Ovary (tissue), 10 donors: ENCODE measurements at regions of chr3 and their contacts with region 1.

Region 1: DNA sequence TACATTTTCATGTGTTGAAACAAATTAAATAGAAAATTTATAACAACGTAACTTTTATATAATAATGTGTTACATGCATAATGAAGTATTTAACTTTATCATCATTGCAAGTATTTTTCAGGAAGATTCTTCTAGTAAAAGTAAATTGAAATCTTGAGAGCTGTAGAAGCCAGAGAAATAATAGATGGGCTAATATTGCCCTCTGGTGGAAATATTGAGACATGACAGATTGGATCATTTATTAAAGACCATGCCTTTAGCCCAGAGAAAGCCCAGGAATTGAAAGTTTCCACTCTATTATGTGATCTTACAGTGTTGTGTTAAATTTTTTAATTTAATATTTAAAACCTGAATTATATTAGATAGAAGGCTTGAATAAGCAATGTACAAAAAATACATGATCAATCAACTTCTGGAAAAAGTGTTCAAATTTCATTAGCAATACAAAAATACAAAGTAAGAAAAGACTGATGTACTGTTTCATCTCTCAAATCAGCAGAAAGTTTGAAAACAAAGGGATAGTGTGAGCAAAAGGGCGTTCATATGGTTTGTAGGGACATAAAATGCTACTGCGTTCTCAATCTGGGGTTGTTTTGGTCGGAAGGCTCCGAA is 52.7 kb upstream of the SPTSSB start:
- DNase-seq: no peak
- H3K4me3 ChIP-seq: no peak overlapping the region
- H3K27ac ChIP-seq: no peak overlapping the region
- H3K4me1 ChIP-seq: no peaks in the 10 kb centered on the region
- H3K27me3 ChIP-seq: no peaks in the 10 kb centered on the region
- CTCF ChIP-seq: peak; percentile 38 to 58 (median 47)
- EP300 ChIP-seq: no peak
- POLR2A ChIP-seq: no peak

Region 2: GRCh38 chr3:160697628-160698382 is 726.2 kb before region 1 on chr3:
- intact Hi-C with region 1: loop called in 2 of 4 experiments (anchors 10 kb)
- DNase-seq: no peak
- H3K4me3 ChIP-seq: no peak overlapping the region
- H3K27ac ChIP-seq: no peak overlapping the region
- H3K4me1 ChIP-seq: no peaks in the 10 kb centered on the region
- H3K27me3 ChIP-seq: no peaks in the 10 kb centered on the region
- CTCF ChIP-seq: no peak
- EP300 ChIP-seq: no peak
- POLR2A ChIP-seq: no peak

Region 3: DNA sequence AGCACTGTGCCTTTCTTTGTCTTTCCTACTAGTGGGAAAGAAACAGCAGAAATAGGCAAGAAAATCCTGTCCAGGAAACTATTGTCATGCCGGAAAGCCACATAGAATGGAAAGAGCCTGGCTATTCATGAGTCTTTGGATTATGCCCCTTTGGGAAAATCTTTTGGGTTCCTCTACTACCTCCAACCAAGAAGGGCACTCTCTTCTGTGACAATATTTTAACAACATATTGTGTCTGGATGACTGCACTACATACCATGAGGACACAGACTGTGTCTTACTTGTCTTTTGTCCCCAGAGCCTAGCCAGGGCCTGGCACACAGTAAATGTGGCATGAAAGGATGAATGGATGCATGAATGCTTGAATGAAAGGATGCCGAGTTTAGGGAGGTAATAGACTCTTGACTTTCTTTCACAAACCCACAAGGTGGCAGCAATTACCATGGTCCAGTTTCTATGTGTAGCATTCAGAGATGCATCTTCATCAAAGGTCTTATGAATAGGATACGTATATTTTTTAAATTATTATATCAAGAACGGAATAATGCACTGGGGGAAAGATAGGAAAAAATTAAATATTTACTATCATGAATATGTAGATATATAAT is 716.7 kb before region 1 on chr3:
- intact Hi-C with region 1: loop called in 1 of 4 experiments (anchors 10 kb)
- DNase-seq: peak in 2 of 5 donors; percentile 19 to 28
- H3K4me3 ChIP-seq: no peak overlapping the region
- H3K27ac ChIP-seq: no peak overlapping the region
- H3K4me1 ChIP-seq: no peaks in the 10 kb centered on the region
- H3K27me3 ChIP-seq: no peaks in the 10 kb centered on the region
- CTCF ChIP-seq: peak; percentile 13 to 41 (median 40)
- EP300 ChIP-seq: no peak
- POLR2A ChIP-seq: no peak

Region 4: DNA sequence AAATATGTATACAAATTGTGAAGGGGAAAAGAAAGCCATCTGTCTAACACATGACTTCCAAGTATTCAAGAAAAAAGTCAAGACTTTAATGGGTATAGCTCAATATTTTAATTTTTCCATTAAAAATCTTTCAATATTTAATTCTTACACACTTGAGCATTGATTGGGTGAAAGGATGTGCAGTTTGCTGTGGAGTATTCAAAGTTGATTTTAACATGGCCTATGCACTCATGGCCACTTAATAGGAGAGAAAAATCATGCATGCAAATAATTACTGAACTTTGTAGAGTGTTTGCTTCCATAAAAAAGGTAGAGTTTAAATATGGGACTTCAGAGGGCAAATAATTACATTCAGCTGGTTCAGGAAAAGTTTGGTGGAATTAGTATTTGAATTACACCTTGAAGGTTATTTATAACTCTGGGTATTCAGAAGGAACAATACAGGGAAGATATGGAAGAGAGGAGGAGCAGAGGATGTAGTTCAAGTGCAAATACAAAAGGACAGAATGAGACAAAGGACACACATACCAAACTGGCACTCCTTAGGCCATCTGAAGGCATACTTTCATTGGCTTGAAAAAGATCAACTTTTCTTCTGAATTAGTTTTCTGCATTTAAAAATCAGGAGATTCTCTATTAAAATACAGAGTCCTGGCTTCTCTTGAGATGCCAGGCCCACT is 162.7 kb after region 1 on chr3:
- intact Hi-C with region 1: no loop called
- DNase-seq: no peak
- H3K4me3 ChIP-seq: no peak overlapping the region
- H3K27ac ChIP-seq: no peak overlapping the region
- H3K4me1 ChIP-seq: no peaks in the 10 kb centered on the region
- H3K27me3 ChIP-seq: no peaks in the 10 kb centered on the region
- CTCF ChIP-seq: no peak
- EP300 ChIP-seq: no peak
- POLR2A ChIP-seq: no peak